Endothelial cell of umbilical vein (primary cell): ENCODE measurements at regions of chr3 and their contacts with region 1.

Region 1: GRCh38 chr3:131502530-131503245 is at the start of gene MRPL3:
- DNase-seq: peak; percentile 67
- H3K4me3 ChIP-seq: peak within 1 kb of the TSS; percentile 65 to 85 (median 85)
- H3K27ac ChIP-seq: peak within 1 kb of the TSS; percentile 62
- H3K4me1 ChIP-seq: peaks cover 32% of the 10 kb centered on the region
- H3K27me3 ChIP-seq: no peaks in the 10 kb centered on the region
- CTCF ChIP-seq: no peak
- POLR2A ChIP-seq: peak; percentile 56
- total RNA-seq, gene MRPL3: 68.2 and 68.8 TPM in 2 replicates

Region 2: DNA sequence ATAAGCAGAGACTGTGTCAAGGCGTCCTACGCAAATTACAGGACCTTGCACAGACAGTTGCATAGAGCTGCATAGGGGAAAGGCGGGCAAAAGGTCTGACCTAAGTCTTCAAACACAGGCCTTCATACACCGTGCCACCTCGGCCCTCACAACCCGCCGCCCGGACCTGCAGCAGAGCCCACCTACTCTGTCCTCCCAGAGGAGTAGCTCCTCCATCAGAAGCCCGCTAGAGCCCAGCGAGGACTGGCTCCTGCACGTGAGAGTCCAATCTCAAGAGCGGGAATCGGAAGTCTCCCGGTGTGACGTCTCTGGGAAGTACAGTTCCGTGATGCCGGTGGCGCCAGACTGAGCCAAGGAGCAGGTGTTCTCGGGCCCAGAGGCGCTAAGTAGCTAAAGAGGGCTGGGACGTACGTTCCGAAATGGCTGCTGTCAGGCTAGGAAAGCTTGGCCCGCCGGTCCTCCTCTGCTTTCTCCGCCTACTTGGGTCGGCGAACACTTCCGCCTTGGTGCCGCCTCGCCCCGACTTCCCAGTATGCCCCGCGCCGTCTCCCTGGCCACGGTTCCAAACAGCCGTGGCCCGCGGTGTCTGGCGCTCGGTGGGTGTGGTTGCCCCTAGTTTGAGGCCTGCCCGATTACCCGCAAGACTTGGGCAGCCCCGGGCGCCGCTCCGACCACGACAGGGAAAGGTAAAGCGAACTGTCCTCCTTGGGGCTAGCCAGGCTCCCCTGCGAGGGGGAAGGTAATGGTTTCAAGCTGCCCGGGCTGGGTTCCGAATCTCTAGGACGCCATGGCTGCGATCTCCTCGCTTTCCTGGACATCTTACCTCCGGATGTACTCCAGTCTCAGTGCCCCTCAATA is 476.1 kb before region 1 on chr3 and contains the starts of genes ASTE1 and NEK11:
- CTCF ChIA-PET with region 1: no interaction called
- POLR2A ChIA-PET with region 1: no interaction called
- dilution Hi-C with region 1: no loop called
- intact Hi-C with region 1: loop called (anchors 2 kb)
- DNase-seq: peak; percentile 84
- H3K4me3 ChIP-seq: peak within 1 kb of the TSS; percentile 44 to 72 (median 54)
- H3K27ac ChIP-seq: peak within 1 kb of the TSS; percentile 91
- H3K4me1 ChIP-seq: peaks cover 15% of the 10 kb centered on the region
- H3K27me3 ChIP-seq: no peaks in the 10 kb centered on the region
- CTCF ChIP-seq: no peak
- POLR2A ChIP-seq: peak; percentile 88
- total RNA-seq, gene ASTE1: 5.8 and 6.7 TPM in 2 replicates
- total RNA-seq, gene NEK11: 3.1 and 4.3 TPM in 2 replicates

Region 3: DNA sequence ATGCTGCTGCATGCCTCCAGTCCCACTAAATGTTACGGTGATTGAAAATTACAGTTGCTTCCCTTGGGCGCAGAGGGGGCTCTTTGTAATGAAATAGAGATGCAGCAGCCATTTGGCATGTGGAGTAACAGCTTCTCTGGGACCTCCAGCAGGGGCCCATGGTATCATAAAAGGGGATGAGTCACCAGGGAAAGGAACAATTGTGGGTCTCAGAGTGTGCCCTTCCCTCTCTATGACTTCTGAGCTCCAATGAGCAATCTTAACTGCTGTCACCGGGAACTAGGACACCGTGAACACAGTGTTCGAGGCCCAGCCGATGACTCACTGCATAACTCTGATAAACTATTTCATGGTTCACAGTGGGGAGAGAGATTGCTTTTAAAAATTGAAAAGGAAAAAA is 285.9 kb before region 1 on chr3:
- CTCF ChIA-PET with region 1: no interaction called
- POLR2A ChIA-PET with region 1: no interaction called
- dilution Hi-C with region 1: no loop called
- intact Hi-C with region 1: loop called (anchors 5 kb)
- DNase-seq: peak; percentile 53
- H3K4me3 ChIP-seq: no peak overlapping the region
- H3K27ac ChIP-seq: peak overlapping the region; percentile 27
- H3K4me1 ChIP-seq: peaks cover 23% of the 10 kb centered on the region
- H3K27me3 ChIP-seq: no peaks in the 10 kb centered on the region
- CTCF ChIP-seq: no peak
- POLR2A ChIP-seq: no peak

Region 4: DNA sequence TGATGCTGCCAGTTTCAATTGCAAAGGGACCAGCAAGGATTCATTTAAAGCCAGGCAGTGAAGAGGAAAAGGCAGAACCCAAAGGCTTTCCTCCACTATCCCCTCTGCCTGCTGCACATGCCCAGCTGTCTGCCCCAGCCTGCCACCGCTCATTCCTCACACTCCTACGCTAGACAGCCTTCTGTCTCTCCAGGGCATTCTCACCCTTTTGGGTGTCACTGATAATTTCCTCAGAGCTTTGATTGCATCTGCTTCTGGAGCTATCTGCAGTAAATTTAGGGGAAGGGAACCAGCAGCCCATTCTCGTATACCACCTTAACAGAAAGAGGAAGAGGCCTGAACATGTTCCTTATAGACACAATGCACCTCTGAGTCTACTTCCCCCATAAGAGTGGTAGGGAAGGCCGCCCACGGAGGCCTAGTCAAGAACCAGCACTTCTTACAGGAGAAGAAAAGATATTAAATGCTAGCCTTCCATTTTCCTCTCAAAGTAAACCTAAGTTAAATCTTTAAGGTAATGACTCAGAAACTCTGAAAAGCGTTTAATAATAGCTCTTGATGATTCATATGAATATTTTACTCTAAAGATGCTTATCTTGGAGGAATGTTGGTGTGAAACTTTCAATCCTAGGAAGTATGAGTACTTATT is 100.2 kb before region 1 on chr3:
- CTCF ChIA-PET with region 1: interaction called, 4 read pairs
- POLR2A ChIA-PET with region 1: interaction called, 3 read pairs
- dilution Hi-C with region 1: no loop called
- intact Hi-C with region 1: loop called (anchors 1 kb)
- DNase-seq: peak; percentile 87
- H3K4me3 ChIP-seq: no peak overlapping the region
- H3K27ac ChIP-seq: peak overlapping the region; percentile 87
- H3K4me1 ChIP-seq: peaks cover 24% of the 10 kb centered on the region
- H3K27me3 ChIP-seq: no peaks in the 10 kb centered on the region
- CTCF ChIP-seq: no peak
- POLR2A ChIP-seq: no peak

Region 5: GRCh38 chr3:131480116-131480515 is 22.6 kb before region 1 on chr3:
- CTCF ChIA-PET with region 1: no interaction called
- POLR2A ChIA-PET with region 1: no interaction called
- dilution Hi-C with region 1: no loop called
- intact Hi-C with region 1: loop called (anchors 2 kb)
- DNase-seq: no peak
- H3K4me3 ChIP-seq: no peak overlapping the region
- H3K27ac ChIP-seq: no peak overlapping the region
- H3K4me1 ChIP-seq: no peaks in the 10 kb centered on the region
- H3K27me3 ChIP-seq: no peaks in the 10 kb centered on the region
- CTCF ChIP-seq: no peak
- POLR2A ChIP-seq: no peak

Region 6: GRCh38 chr3:131602011-131602764 is 99.5 kb after region 1 on chr3:
- CTCF ChIA-PET with region 1: no interaction called
- POLR2A ChIA-PET with region 1: no interaction called
- dilution Hi-C with region 1: no loop called
- intact Hi-C with region 1: no loop called
- DNase-seq: no peak
- H3K4me3 ChIP-seq: no peak overlapping the region
- H3K27ac ChIP-seq: no peak overlapping the region
- H3K4me1 ChIP-seq: no peaks in the 10 kb centered on the region
- H3K27me3 ChIP-seq: no peaks in the 10 kb centered on the region
- CTCF ChIP-seq: no peak
- POLR2A ChIP-seq: no peak